Aorta (tissue), 5 donors: ENCODE measurements at regions of chr19 and their contacts with region 1.

Region 1: GRCh38 chr19:7197760-7198696 is 96.2 kb downstream of the INSR start:
- DNase-seq: peak; percentile 96 to 97
- ATAC-seq: peak; percentile 95
- H3K4me3 ChIP-seq: peak overlapping the region; percentile 61 to 74
- H3K27ac ChIP-seq: peak overlapping the region in 1 of 2 donors; percentile 72
- H3K4me1 ChIP-seq: no peaks in the 10 kb centered on the region
- H3K27me3 ChIP-seq: no peaks in the 10 kb centered on the region

Region 2: DNA sequence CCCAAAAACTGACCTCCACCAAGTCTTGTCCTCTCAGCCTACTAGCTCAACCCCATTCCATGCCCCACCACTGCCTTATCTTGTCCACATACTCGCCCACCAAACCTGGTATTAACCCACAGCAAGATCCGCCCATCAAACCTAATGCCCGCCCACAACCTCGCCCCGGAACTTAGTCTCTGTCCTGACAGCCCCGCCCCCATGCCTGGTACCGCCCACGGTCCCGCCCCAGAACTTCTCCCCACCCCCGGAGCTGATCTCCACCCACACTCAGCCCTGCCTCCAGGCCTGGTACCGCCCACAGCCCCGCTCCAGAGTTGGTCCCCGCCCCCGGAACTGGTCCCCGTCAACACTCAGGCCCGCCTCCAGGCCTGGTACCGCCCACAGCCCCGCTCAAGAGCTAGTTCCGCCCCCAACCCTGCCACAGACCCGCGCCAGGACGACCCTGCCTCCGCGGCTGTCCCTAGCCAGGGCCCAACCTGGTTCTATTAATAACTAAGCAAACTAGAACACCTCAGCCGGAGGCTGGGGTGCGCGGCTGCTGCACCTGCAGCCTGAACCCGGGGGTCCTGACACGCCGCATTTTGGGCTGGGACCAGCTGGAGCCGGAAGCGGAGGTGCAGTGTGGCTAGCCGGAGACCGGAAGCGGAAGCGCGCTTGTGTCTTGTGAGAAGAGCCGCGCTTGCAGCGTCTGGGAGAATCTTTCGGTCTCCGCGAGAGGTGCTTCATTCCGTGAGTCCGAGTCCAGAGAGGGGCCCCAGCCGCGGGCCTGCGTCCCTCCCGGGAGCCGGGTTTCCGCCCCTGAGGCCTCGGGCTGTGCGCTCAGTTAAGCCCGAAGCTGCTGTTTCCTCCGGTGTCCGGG is 128.8 kb before region 1 on chr19 and contains the start of gene ZNF557:
- intact Hi-C with region 1: no loop called
- DNase-seq: peak; percentile 100
- ATAC-seq: peak; percentile 100
- H3K4me3 ChIP-seq: peak within 1 kb of the TSS; percentile 62 to 96
- H3K27ac ChIP-seq: peak within 1 kb of the TSS in 1 of 2 donors; percentile 7
- H3K4me1 ChIP-seq: no peaks in the 10 kb centered on the region
- H3K27me3 ChIP-seq: no peaks in the 10 kb centered on the region
- total RNA-seq, gene ZNF557: 10.6 to 11.5 TPM

Region 3: DNA sequence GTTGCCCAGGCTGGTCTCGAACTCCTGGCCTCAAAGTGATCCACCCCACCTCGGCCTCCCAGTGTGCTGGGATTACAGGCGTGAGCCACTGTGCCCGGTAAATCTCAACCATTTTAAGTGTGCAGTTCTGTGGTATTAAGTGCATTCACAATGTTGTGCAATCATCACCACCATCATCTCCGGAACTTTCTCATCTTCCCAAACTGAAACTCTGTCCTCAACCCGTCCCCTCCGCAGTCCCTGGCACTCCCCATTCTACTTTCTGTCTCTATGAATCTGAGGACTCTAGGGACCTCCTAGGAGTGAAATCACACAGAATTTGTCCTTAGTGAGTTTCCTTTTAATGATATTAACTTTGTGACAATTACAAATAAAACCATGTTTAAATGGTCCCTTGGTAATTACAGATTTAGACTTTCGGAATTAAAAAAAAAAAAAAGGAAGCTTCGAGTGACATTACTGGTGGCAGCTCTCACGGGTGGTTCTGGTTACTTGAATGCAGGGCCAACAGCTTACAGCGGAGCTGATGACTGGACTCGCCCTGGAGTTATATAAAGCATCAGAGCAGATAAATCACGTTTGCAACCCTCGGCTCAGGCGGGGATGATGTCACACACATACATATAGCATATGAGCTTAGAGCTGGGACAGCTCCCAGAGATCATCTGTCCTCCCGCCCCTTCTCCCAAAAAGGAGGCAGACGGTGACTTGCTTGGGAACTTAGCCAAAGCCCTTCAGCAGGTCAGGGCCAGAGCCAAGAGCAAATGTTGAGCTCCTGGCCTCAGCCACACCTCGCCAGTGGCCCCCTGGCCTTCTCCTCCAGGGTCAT is 38.7 kb before region 1 on chr19:
- intact Hi-C with region 1: loop called (anchors 2 to 5 kb)
- DNase-seq: peak; percentile 83 to 87
- ATAC-seq: peak; percentile 94
- H3K4me3 ChIP-seq: no peak overlapping the region
- H3K27ac ChIP-seq: peak overlapping the region; percentile 73 to 77
- H3K4me1 ChIP-seq: no peaks in the 10 kb centered on the region
- H3K27me3 ChIP-seq: no peaks in the 10 kb centered on the region

Region 4: GRCh38 chr19:7242601-7243258 is 44.7 kb after region 1 on chr19:
- intact Hi-C with region 1: loop called (anchors 2 kb)
- DNase-seq: no peak
- ATAC-seq: peak; percentile 87
- H3K4me3 ChIP-seq: no peak overlapping the region
- H3K27ac ChIP-seq: peak overlapping the region; percentile 87 to 100
- H3K4me1 ChIP-seq: peaks cover 0 to 3% of the 10 kb centered on the region in 2 donors
- H3K27me3 ChIP-seq: no peaks in the 10 kb centered on the region

Region 5: GRCh38 chr19:7471696-7472615 is 273.9 kb after region 1 on chr19:
- intact Hi-C with region 1: no loop called
- DNase-seq: no peak
- ATAC-seq: no peak
- H3K4me3 ChIP-seq: no peak overlapping the region
- H3K27ac ChIP-seq: no peak overlapping the region
- H3K4me1 ChIP-seq: no peaks in the 10 kb centered on the region
- H3K27me3 ChIP-seq: no peaks in the 10 kb centered on the region